Natural killer cell (primary cell): ENCODE measurements at regions of chr11 and their contacts with region 1.

Region 1: DNA sequence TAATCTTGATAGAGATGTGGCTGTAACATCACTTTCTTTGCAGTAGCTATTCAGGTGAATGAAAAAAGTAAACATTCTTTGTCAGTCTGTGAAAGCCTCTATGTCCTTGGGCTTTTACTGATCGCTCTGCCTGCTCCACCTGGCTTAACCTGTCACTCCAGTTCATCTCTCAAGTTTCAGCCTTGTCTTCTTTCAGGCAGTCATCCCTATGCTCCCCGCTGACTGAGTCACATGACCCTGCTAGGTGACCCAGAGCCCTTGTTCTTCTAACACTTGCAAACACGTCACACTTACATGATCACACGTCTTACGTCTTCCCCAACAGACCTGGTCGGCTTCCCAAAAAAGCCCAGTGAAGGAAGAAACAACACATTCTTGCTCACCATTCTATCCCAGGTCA is 499.3 kb upstream of the TENM4 start:
- DNase-seq: no peak
- ATAC-seq: no peak
- H3K4me3 ChIP-seq: no peak overlapping the region
- H3K4me3 Mint-ChIP-seq: no peak overlapping the region
- H3K27ac ChIP-seq: no peak overlapping the region
- H3K27ac Mint-ChIP-seq: no peak overlapping the region
- H3K4me1 ChIP-seq: no peaks in the 10 kb centered on the region
- H3K4me1 Mint-ChIP-seq: no peaks in the 10 kb centered on the region
- H3K27me3 ChIP-seq: no peaks in the 10 kb centered on the region
- H3K27me3 Mint-ChIP-seq: no peaks in the 10 kb centered on the region
- CTCF ChIP-seq: no peak

Region 2: GRCh38 chr11:79880271-79880670 is 59.9 kb before region 1 on chr11:
- intact Hi-C with region 1: loop called (anchors 10 kb)
- DNase-seq: no peak
- ATAC-seq: no peak
- H3K4me3 ChIP-seq: no peak overlapping the region
- H3K4me3 Mint-ChIP-seq: no peak overlapping the region
- H3K27ac ChIP-seq: no peak overlapping the region
- H3K27ac Mint-ChIP-seq: no peak overlapping the region
- H3K4me1 ChIP-seq: no peaks in the 10 kb centered on the region
- H3K4me1 Mint-ChIP-seq: no peaks in the 10 kb centered on the region
- H3K27me3 ChIP-seq: no peaks in the 10 kb centered on the region
- H3K27me3 Mint-ChIP-seq: no peaks in the 10 kb centered on the region
- CTCF ChIP-seq: no peak